Heart left ventricle (tissue), 16 donors: ENCODE measurements at regions of chr7 and their contacts with region 1.

Region 1: DNA sequence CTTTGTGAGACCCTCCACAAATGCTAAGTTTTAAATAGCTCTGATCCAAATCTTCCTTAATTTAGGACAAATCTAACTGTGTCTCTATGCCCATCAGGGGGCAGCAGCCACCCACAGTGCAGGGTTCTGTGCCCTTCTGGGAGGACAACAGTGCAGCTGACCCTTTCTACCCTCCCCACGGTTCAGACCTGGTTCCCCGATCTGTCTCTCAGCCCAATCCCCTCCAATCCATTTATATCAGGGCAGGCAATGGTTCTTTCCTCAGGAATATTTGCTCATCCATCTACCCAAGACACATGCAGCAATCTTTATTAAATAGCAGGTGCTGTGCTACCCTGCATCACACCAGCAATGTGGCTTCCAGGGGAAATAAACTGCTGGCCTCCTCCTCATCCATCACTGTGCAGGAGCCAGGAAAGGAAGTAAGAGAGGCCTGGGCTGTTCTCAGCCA is 4.0 kb upstream of the RBM28 start:
- DNase-seq: peak in 3 of 5 donors; percentile 49 to 67 (median 53)
- ATAC-seq: peak in 2 of 4 donors; percentile 25 to 42
- H3K4me3 ChIP-seq: no peak overlapping the region
- H3K27ac ChIP-seq: no peak overlapping the region
- H3K4me1 ChIP-seq: peaks cover 0 to 22% (median 9%) of the 10 kb centered on the region in 12 donors
- H3K27me3 ChIP-seq: peaks cover 0 to 21% (median 6%) of the 10 kb centered on the region in 9 donors
- CTCF ChIP-seq: peak; percentile 51 to 74 (median 67)
- POLR2A ChIP-seq: no peak

Region 2: GRCh38 chr7:128387216-128388144 is 39.8 kb after region 1 on chr7:
- intact Hi-C with region 1: loop called (anchors 1 to 2 kb)
- DNase-seq: peak; percentile 78 to 86 (median 82)
- ATAC-seq: peak; percentile 60 to 90 (median 85)
- H3K4me3 ChIP-seq: peak overlapping the region in 3 of 12 donors; percentile 14 to 24 (median 19)
- H3K27ac ChIP-seq: no peak overlapping the region
- H3K4me1 ChIP-seq: peaks cover 0 to 13% (median 5%) of the 10 kb centered on the region in 12 donors
- H3K27me3 ChIP-seq: peaks cover 0 to 3% (median 0%) of the 10 kb centered on the region in 9 donors
- CTCF ChIP-seq: peak; percentile 79 to 91 (median 86)
- POLR2A ChIP-seq: no peak

Region 3: GRCh38 chr7:129188372-129188891 is 840.8 kb after region 1 on chr7 and contains the start of gene SMO:
- intact Hi-C with region 1: no loop called
- DNase-seq: peak; percentile 41 to 80 (median 57)
- ATAC-seq: peak; percentile 66 to 87 (median 82)
- H3K4me3 ChIP-seq: peak within 1 kb of the TSS; percentile 56 to 93 (median 81)
- H3K27ac ChIP-seq: peak within 1 kb of the TSS in 6 of 12 donors; percentile 23 to 70 (median 47)
- H3K4me1 ChIP-seq: peaks cover 0 to 29% (median 6%) of the 10 kb centered on the region in 12 donors
- H3K27me3 ChIP-seq: peaks cover 0 to 37% (median 0%) of the 10 kb centered on the region in 9 donors
- CTCF ChIP-seq: no peak
- POLR2A ChIP-seq: no peak
- total RNA-seq, gene SMO: 3.1 to 7.3 (median 3.9) TPM